ENCODE measurements at regions of chr16 and their contacts with region 1.

Region 1: GRCh38 chr16:4116337-4117249 is at the start of gene ADCY9:
- DNase-seq: peak; percentile 82 to 91 (median 87)
- ATAC-seq: peak; percentile 25 to 83 (median 78)
- H3K4me3 ChIP-seq: peak within 1 kb of the TSS; percentile 50 to 92 (median 70)
- H3K27ac ChIP-seq: peak within 1 kb of the TSS in 11 of 12 donors; percentile 70 to 87 (median 83)
- H3K4me1 ChIP-seq: peaks cover 0 to 46% (median 32%) of the 10 kb centered on the region in 12 donors
- H3K27me3 ChIP-seq: no peaks in the 10 kb centered on the region
- CTCF ChIP-seq: no peak
- POLR2A ChIP-seq: peak in 1 of 2 donors; percentile 55
- total RNA-seq, gene ADCY9: 39.5 to 85.8 (median 45.3) TPM

Region 2: DNA sequence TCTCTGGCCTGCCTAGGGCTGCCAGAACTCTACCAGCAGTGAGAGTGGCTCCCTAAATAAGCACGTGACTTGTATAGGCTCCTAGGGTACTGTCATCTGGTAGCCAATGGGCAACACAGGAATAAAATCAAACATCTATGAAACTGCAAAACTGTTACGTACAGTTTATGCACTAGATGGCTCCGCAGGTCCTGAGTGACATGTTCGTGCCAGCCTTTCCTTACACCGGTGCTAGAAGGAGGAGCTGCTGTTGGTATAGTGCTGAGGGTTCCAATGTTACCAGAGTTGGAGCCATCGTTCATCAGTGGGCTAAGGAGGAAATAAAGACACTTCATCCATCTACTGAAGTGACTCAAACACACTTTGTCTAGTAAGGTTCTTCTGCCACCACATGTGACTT is 336.0 kb before region 1 on chr16:
- intact Hi-C with region 1: no loop called
- DNase-seq: no peak
- ATAC-seq: peak in 2 of 4 donors; percentile 62 to 68
- H3K4me3 ChIP-seq: no peak overlapping the region
- H3K27ac ChIP-seq: no peak overlapping the region
- H3K4me1 ChIP-seq: peaks cover 0 to 10% (median 0%) of the 10 kb centered on the region in 12 donors
- H3K27me3 ChIP-seq: no peaks in the 10 kb centered on the region
- CTCF ChIP-seq: peak in 2 of 12 donors; percentile 7 to 18
- POLR2A ChIP-seq: no peak

Region 3: DNA sequence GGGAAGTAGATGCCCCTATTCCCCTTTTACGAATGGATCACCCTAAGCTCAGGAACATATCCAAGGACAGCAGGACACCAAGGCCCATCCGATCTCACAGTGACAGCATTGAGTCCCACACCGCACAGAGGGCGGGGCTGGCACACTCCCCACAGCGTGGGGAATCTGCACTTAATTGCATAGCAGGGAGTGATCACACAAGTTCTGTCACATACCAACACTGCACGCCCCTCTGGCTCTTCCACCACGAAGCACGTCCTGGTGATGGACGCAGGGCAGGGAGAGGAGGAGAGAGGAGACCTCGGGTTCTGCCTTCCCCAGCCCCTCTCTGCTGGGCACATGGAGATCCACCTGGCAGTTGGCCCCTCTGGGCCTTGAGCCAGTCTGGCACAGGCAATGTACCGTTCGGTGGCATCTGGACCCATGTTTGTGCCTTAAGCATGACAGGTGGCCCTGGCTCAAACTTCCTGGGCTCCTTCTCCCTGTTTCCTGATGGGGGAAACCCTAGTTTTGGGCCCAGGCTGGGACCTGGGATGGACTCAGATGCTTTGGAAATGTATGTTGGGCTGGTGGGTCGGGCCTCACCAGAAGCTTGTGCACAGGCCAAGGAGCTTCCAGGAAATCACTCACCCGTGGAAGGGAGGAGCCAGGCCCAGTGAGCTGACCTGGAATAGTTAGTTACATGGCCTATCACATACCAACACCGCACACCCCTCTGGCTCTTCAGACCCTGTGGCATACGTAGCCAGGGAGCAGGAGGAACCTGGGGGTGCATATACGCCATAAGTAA is 201.0 kb before region 1 on chr16:
- intact Hi-C with region 1: no loop called
- DNase-seq: no peak
- ATAC-seq: no peak
- H3K4me3 ChIP-seq: no peak overlapping the region
- H3K27ac ChIP-seq: no peak overlapping the region
- H3K4me1 ChIP-seq: no peaks in the 10 kb centered on the region
- H3K27me3 ChIP-seq: no peaks in the 10 kb centered on the region
- CTCF ChIP-seq: no peak
- POLR2A ChIP-seq: no peak

Region 4: GRCh38 chr16:3938848-3939624 is 177.6 kb before region 1 on chr16:
- intact Hi-C with region 1: loop called in 1 of 10 experiments (anchors 5 kb)
- DNase-seq: peak in 4 of 5 donors; percentile 47 to 88 (median 59)
- ATAC-seq: peak; percentile 57 to 89 (median 84)
- H3K4me3 ChIP-seq: peak overlapping the region; percentile 19 to 66 (median 53)
- H3K27ac ChIP-seq: peak overlapping the region in 2 of 12 donors; percentile 15 to 39
- H3K4me1 ChIP-seq: peaks cover 0 to 12% (median 6%) of the 10 kb centered on the region in 12 donors
- H3K27me3 ChIP-seq: no peaks in the 10 kb centered on the region
- CTCF ChIP-seq: peak; percentile 92 to 100 (median 97)
- POLR2A ChIP-seq: no peak

Region 5: DNA sequence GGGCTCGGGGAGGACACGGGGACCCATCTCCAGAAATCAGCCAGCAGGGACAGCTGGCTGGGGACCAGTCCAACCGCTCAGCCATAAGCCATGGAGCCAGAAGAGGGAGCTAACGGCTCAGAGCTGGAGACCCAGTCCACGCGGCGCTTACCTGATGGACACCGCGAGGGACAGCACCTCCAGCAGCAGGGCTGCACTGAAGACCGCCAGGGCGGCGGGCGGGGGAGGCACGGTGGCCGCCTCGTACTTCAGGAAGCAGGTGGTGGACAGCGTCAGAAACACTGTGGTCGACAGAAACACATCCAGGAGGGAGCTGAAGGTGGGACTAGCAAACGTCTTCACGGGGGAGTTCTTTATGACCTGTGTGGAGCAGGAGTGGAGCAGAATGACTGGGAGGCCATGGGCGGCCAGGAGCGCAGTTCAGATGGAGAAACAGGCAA is 133.5 kb before region 1 on chr16:
- intact Hi-C with region 1: loop called in 3 of 10 experiments (anchors 5 to 10 kb)
- DNase-seq: peak; percentile 65 to 74 (median 70)
- ATAC-seq: peak; percentile 67 to 89 (median 80)
- H3K4me3 ChIP-seq: no peak overlapping the region
- H3K27ac ChIP-seq: no peak overlapping the region
- H3K4me1 ChIP-seq: peaks cover 0 to 12% (median 4%) of the 10 kb centered on the region in 12 donors
- H3K27me3 ChIP-seq: no peaks in the 10 kb centered on the region
- CTCF ChIP-seq: peak; percentile 49 to 83 (median 69)
- POLR2A ChIP-seq: no peak

Region 6: DNA sequence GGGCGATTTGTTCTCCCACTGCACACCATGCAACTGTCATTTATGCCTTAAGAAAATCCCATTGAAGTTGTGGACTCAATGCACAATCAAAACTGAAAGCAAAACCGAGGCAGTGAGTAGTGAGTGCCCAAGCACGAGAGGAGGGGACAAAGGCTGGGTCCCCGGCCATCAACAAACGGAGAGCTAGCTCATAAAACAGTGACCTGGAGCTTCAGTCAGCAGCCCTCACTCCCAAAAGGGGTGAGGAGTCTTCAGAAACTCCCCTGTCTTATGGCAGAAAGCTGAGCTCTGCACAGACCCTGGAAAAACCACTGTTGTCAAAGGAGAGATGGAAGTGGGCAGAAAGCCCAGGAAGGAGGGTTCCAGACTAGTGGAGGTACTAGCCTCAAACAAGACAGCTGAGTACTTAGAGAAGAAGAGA is 97.2 kb before region 1 on chr16:
- intact Hi-C with region 1: loop called in 1 of 10 experiments (anchors 10 kb)
- DNase-seq: no peak
- ATAC-seq: peak; percentile 34 to 67 (median 48)
- H3K4me3 ChIP-seq: peak overlapping the region in 10 of 12 donors; percentile 17 to 55 (median 41)
- H3K27ac ChIP-seq: peak overlapping the region in 8 of 12 donors; percentile 15 to 63 (median 54)
- H3K4me1 ChIP-seq: peaks cover 0 to 18% (median 6%) of the 10 kb centered on the region in 12 donors
- H3K27me3 ChIP-seq: no peaks in the 10 kb centered on the region
- CTCF ChIP-seq: no peak
- POLR2A ChIP-seq: no peak

Region 7: GRCh38 chr16:4183237-4184036 is 66.8 kb after region 1 on chr16:
- intact Hi-C with region 1: loop called in 6 of 10 experiments (anchors 2 to 10 kb)
- DNase-seq: peak; percentile 93 to 98 (median 94)
- ATAC-seq: peak; percentile 79 to 96 (median 96)
- H3K4me3 ChIP-seq: peak overlapping the region; percentile 43 to 90 (median 76)
- H3K27ac ChIP-seq: peak overlapping the region; percentile 89 to 99 (median 96)
- H3K4me1 ChIP-seq: peaks cover 0 to 17% (median 7%) of the 10 kb centered on the region in 12 donors
- H3K27me3 ChIP-seq: peaks cover 0 to 12% (median 0%) of the 10 kb centered on the region in 9 donors
- CTCF ChIP-seq: peak in 5 of 12 donors; percentile 14 to 51 (median 43)
- POLR2A ChIP-seq: peak in 1 of 2 donors; percentile 83

Measured in heart left ventricle (tissue), 16 donors.